Natural killer cell (primary cell): ENCODE measurements at regions of chr10 and their contacts with region 1.

Region 1: GRCh38 chr10:105986912-105987635 is 1177.4 kb downstream of the SORCS1 start:
- DNase-seq: no peak
- ATAC-seq: no peak
- H3K4me3 ChIP-seq: no peak overlapping the region
- H3K4me3 Mint-ChIP-seq: no peak overlapping the region
- H3K27ac ChIP-seq: no peak overlapping the region
- H3K27ac Mint-ChIP-seq: no peak overlapping the region
- H3K4me1 ChIP-seq: no peaks in the 10 kb centered on the region
- H3K4me1 Mint-ChIP-seq: no peaks in the 10 kb centered on the region
- H3K27me3 ChIP-seq: no peaks in the 10 kb centered on the region
- H3K27me3 Mint-ChIP-seq: no peaks in the 10 kb centered on the region
- CTCF ChIP-seq: no peak

Region 2: GRCh38 chr10:105925045-105925785 is 61.9 kb before region 1 on chr10:
- intact Hi-C with region 1: loop called (anchors 10 kb)
- DNase-seq: no peak
- ATAC-seq: no peak
- H3K4me3 ChIP-seq: no peak overlapping the region
- H3K4me3 Mint-ChIP-seq: no peak overlapping the region
- H3K27ac ChIP-seq: no peak overlapping the region
- H3K27ac Mint-ChIP-seq: no peak overlapping the region
- H3K4me1 ChIP-seq: no peaks in the 10 kb centered on the region
- H3K4me1 Mint-ChIP-seq: no peaks in the 10 kb centered on the region
- H3K27me3 ChIP-seq: no peaks in the 10 kb centered on the region
- H3K27me3 Mint-ChIP-seq: no peaks in the 10 kb centered on the region
- CTCF ChIP-seq: no peak

Region 3: GRCh38 chr10:106038246-106038645 is 51.2 kb after region 1 on chr10:
- intact Hi-C with region 1: no loop called
- DNase-seq: no peak
- ATAC-seq: no peak
- H3K4me3 ChIP-seq: no peak overlapping the region
- H3K4me3 Mint-ChIP-seq: no peak overlapping the region
- H3K27ac ChIP-seq: no peak overlapping the region
- H3K27ac Mint-ChIP-seq: no peak overlapping the region
- H3K4me1 ChIP-seq: no peaks in the 10 kb centered on the region
- H3K4me1 Mint-ChIP-seq: no peaks in the 10 kb centered on the region
- H3K27me3 ChIP-seq: no peaks in the 10 kb centered on the region
- H3K27me3 Mint-ChIP-seq: no peaks in the 10 kb centered on the region
- CTCF ChIP-seq: no peak